Colonic mucosa (tissue), 4 donors: ENCODE measurements at regions of chr7 and their contacts with region 1.

Region 1: DNA sequence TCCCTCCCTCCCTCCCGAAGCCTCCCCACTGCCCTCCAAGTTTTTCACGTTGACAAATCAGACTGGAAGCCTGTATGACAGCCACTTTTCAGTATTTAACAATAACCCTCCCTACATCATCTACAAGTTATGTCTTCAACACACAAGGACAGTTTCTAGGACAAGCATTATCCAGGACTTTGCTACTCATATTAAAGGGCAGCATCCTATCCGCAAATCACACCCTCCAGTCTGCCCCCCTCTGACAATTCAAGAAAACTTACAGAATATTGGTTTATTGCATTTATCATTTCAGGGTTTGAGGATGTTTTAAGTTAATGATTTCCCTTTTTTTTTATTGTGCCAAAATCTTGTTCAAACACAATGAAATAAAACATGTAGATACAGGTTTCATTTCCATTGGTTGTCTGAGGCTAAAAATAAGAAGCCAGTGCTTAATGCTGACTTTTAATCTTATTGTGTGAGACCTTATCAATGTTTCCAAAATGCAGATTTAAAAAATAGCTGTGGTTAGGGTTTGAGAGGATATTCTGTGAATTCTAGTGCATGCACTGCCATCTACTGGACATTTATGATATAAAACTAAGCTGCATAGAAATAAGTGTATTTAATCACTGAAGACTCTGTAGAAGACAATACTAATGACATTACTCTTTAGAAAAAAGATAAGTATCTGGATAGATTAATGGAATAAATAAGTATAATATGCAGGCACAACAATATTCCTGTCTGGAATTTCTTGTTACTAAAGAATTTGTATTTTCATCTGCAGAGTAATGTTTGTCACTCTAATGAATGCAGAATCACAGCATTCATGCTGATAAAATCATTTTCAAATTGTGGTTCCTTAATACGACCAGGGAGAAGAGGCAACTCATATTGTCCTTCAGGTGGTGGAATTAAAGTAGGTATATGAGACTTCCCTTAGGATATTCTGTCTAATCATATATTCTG is 64.1 kb downstream of the CAV1 start:
- DNase-seq: no peak
- H3K4me3 ChIP-seq: no peak overlapping the region
- H3K27ac ChIP-seq: no peak overlapping the region
- H3K4me1 ChIP-seq: no peaks in the 10 kb centered on the region
- H3K27me3 ChIP-seq: no peaks in the 10 kb centered on the region
- CTCF ChIP-seq: peak; percentile 73

Region 2: DNA sequence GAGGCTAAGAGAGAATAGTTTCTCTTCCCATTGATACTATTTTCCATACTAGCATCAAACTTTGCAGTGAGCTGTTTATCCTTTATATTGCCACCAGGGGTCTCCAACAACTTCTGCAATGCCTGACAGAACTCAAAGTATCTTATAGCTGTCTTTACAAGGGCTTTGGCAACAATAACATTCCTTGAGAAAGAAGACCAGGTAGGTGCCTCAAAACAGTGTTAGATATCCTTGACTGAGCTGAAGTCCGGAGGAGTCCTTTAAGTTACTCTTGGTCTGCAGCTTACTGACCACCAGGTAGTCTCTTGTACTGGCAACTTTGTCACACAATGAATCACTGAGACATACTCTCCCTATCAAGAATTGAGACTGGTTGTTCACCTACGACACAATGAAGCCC is 408.6 kb before region 1 on chr7:
- intact Hi-C with region 1: loop called (anchors 5 kb)
- DNase-seq: no peak
- H3K4me3 ChIP-seq: no peak overlapping the region
- H3K27ac ChIP-seq: no peak overlapping the region
- H3K4me1 ChIP-seq: no peaks in the 10 kb centered on the region
- H3K27me3 ChIP-seq: no peaks in the 10 kb centered on the region
- CTCF ChIP-seq: peak; percentile 54

Region 3: DNA sequence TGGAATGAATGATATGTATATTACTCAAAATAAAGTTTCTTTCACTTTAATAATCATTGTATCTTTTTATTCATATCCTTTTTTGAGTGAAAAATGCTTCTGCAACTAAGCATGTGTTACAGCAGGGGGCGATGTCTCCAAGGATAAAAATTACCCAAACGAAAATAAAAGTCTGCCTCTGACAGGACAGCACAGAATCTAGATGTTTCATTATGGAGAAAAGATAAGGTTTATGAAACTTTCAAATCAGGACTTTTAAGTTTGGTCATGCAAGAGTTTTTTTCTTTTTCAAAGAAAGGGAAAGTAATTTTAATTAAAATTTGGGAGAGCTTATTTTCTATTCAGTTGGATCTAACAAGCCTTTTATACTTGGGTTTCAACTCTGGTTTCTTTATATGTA is 330.2 kb before region 1 on chr7:
- intact Hi-C with region 1: loop called (anchors 2 kb)
- DNase-seq: peak; percentile 37
- H3K4me3 ChIP-seq: no peak overlapping the region
- H3K27ac ChIP-seq: no peak overlapping the region
- H3K4me1 ChIP-seq: no peaks in the 10 kb centered on the region
- H3K27me3 ChIP-seq: no peaks in the 10 kb centered on the region
- CTCF ChIP-seq: peak; percentile 80

Region 4: GRCh38 chr7:116305485-116306408 is 283.2 kb before region 1 on chr7:
- intact Hi-C with region 1: no loop called
- DNase-seq: no peak
- H3K4me3 ChIP-seq: no peak overlapping the region
- H3K27ac ChIP-seq: no peak overlapping the region
- H3K4me1 ChIP-seq: no peaks in the 10 kb centered on the region
- H3K27me3 ChIP-seq: no peaks in the 10 kb centered on the region
- CTCF ChIP-seq: no peak

Region 5: DNA sequence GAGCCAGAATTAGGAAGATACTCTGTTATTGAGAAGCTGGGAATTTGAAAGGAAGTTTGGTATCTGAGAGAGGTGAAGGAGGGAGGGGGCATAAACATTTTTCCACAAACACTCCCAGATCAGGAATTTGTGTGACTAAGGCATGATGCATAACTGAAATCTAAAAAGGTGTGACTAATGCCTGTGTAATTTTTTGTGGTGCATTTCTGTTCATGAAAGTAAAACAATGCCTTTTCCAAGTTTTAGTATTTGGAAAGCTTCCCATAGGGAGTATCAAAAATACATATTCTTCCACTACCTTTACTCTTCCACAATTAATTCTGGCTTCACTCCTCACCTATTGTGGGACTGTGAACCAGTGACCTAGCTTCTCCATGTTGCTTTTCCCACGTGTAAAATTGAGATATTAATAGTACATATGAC is 145.8 kb before region 1 on chr7:
- intact Hi-C with region 1: loop called (anchors 10 kb)
- DNase-seq: no peak
- H3K4me3 ChIP-seq: no peak overlapping the region
- H3K27ac ChIP-seq: no peak overlapping the region
- H3K4me1 ChIP-seq: no peaks in the 10 kb centered on the region
- H3K27me3 ChIP-seq: no peaks in the 10 kb centered on the region
- CTCF ChIP-seq: no peak

Region 6: DNA sequence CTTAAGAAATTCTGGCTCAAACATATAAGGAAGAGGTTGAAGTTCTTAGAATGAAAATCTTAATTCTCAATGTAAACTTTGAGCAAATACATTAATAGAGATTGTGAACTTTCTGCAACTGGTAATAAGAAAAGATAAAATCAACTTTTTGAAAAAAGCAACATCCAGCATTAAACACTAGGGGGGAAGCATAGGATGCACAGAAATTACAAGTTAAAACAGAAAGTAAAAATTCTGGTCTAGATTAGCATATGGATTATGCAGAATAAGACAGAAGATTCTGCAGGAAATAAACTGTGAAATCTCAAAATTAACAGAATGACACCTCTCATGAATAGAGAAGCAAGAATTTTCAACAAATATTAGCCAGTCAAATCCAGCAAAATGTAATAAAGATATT is 127.4 kb before region 1 on chr7:
- intact Hi-C with region 1: no loop called
- DNase-seq: no peak
- H3K4me3 ChIP-seq: no peak overlapping the region
- H3K27ac ChIP-seq: no peak overlapping the region
- H3K4me1 ChIP-seq: no peaks in the 10 kb centered on the region
- H3K27me3 ChIP-seq: no peaks in the 10 kb centered on the region
- CTCF ChIP-seq: no peak

Region 7: DNA sequence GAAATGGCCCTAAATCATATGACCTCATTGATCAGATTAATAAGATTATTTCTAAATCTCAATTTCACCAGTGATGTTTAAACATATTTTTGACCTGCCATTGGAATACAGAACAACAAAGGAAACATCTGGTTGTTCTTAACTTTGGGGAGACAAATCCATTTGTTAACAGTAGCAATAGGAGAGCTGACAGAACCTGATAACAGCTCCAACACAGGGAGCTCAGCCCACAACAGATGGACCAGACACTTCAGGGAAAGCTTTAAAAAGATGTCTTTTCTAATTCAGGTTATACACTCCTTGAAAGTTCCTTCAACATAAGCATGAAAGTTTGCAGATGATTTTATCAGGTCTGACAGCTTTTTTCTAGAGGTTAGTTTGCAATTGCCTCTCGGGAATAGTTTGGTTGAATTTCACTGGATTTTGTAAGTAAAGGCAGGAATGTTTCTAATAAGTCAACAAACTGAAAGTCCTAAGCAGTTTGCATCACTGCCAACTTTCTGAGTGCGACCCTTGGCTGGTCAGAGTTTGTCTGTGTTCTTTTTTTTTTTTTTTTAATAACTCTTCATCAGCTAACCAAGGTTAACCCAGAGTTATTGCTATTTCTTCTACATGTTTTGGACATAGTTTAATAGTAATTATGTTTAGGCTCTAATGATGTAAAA is 76.5 kb after region 1 on chr7:
- intact Hi-C with region 1: loop called (anchors 10 kb)
- DNase-seq: no peak
- H3K4me3 ChIP-seq: no peak overlapping the region
- H3K27ac ChIP-seq: no peak overlapping the region
- H3K4me1 ChIP-seq: no peaks in the 10 kb centered on the region
- H3K27me3 ChIP-seq: no peaks in the 10 kb centered on the region
- CTCF ChIP-seq: no peak

Region 8: DNA sequence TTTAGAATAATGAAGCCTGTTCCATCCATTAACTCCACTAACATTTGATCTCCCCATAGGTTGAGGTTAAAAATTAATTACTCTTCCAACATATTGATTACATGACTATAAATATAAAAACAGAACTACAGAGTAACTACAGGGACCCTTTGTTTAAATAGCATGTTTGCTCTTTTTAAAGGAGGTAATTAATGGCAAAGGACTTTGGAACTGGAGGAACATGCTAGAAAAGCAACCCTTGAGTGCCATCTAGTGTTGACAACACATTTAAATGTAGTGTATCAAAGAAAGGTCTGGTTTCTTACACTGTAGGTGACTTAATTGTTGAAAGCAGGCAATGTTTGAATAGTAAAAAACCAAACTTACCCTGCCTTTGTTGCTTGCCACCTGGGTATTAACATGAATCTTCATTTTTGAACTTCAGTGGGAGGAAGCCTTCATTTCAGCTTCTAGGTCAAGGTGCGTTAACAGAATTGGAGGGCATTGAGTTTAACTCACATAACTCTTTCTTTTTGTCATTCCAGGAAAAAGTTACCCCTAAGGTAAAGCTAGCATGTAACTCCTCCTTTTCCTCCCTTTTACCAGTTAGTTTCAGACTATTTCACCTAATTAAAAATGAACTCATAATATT is 220.8 kb after region 1 on chr7:
- intact Hi-C with region 1: loop called (anchors 2 kb)
- DNase-seq: peak; percentile 66
- H3K4me3 ChIP-seq: no peak overlapping the region
- H3K27ac ChIP-seq: peak overlapping the region; percentile 67
- H3K4me1 ChIP-seq: peaks cover 10% of the 10 kb centered on the region
- H3K27me3 ChIP-seq: no peaks in the 10 kb centered on the region
- CTCF ChIP-seq: peak; percentile 54